ENCODE measurements at regions of chr19 and their contacts with region 1.

Region 1: DNA sequence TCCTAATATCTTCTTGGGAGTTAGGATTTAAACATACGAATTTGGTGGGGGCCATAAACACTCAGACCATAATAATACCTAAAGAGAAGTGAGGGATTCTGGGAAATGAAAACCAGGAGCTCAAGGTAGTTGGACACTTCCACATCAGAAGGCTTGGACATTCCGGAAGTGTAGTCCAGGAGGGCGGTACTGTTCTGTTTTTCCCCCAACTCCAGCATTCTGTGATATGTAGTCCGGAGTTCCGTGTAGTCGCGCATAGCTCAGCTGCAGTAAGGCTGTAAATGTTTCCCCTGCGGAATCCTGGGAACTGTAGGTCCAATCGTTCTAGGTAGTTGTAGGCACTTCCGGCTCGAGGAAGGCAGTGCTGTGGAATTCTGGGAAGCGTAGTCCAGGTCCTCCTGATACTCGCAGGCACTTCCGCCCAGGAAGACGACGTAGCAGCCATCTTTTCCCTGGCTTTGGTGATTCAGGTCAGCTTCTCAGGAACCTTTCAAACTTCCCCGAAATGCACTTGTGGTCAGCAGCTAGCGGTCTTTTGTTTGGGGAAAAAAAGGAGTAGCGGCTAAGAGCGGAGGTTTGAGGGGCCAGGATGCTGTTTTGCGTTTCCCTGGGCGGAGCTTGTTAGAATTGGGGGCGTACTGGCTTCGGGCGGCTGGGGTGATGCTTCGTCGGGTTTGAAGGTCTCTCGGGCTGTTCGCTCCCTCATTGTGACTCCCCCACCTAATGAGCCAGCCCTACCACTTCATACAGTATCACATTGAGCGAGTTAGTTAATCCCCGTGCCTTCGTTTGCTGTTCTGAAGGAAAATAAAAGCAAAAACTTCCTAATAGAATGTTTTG is at the start of gene ZNF226:
- DNase-seq: peak; percentile 89
- H3K4me3 Mint-ChIP-seq: peak within 1 kb of the TSS; percentile 97
- H3K27ac Mint-ChIP-seq: peak within 1 kb of the TSS; percentile 97
- H3K4me1 Mint-ChIP-seq: peaks cover 24% of the 10 kb centered on the region
- H3K27me3 Mint-ChIP-seq: no peaks in the 10 kb centered on the region
- total RNA-seq, gene ZNF226: 10.6 to 10.7 TPM

Region 2: GRCh38 chr19:44025217-44025936 is 139.5 kb before region 1 on chr19 and contains the start of gene ZNF222:
- CTCF ChIA-PET with region 1: no interaction called
- POLR2A ChIA-PET with region 1: no interaction called
- intact Hi-C with region 1: loop called (anchors 5 kb)
- DNase-seq: peak; percentile 90
- H3K4me3 Mint-ChIP-seq: peak within 1 kb of the TSS; percentile 90
- H3K27ac Mint-ChIP-seq: peak within 1 kb of the TSS; percentile 60
- H3K4me1 Mint-ChIP-seq: peaks cover 18% of the 10 kb centered on the region
- H3K27me3 Mint-ChIP-seq: peaks cover 2% of the 10 kb centered on the region
- total RNA-seq, gene ZNF222: 0.88 to 0.94 TPM

Region 3: DNA sequence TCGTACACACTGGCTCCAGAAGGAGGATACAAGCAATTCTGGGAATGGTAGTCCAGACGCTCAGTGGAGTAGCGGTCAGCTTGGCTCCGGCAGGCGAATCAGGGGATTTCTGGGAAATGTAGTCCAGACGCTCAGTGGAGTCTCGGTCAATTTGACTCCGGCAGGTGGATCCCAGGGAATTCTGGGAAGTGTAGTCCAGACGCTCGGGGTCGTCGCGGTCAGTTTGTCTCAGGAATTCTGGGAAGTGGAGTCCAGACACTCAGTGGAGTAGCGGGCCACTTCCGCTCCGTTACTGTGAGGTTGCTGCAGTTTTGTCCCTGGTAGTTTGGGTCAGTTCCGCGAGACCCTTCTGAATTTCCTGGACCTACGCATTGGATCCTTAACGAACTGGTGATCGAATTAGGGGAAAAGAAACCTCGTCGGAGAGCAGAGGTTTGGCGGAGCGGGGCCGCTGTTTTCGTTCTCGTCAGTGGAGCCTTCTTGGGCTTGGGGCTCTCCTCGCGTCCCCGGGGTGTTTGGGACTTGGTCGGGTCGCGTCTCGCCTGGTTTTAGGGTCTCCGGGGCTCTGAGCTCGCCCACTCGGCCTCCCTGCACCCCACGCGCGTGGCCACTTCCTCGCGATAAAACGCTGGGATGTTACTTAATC is 51.6 kb before region 1 on chr19 and contains the start of gene ZNF225:
- CTCF ChIA-PET with region 1: no interaction called
- POLR2A ChIA-PET with region 1: no interaction called
- intact Hi-C with region 1: loop called (anchors 1 kb)
- DNase-seq: peak; percentile 92
- H3K4me3 Mint-ChIP-seq: peak within 1 kb of the TSS; percentile 91
- H3K27ac Mint-ChIP-seq: peak within 1 kb of the TSS; percentile 74
- H3K4me1 Mint-ChIP-seq: peaks cover 22% of the 10 kb centered on the region
- H3K27me3 Mint-ChIP-seq: no peaks in the 10 kb centered on the region
- total RNA-seq, gene ZNF225: 2.5 to 2.9 TPM

Region 4: GRCh38 chr19:44141191-44142058 is 23.5 kb before region 1 on chr19 and contains the start of gene ZNF234:
- CTCF ChIA-PET with region 1: no interaction called
- POLR2A ChIA-PET with region 1: interaction called, 3 read pairs
- intact Hi-C with region 1: loop called (anchors 1 kb)
- DNase-seq: peak; percentile 78
- H3K4me3 Mint-ChIP-seq: peak within 1 kb of the TSS; percentile 91
- H3K27ac Mint-ChIP-seq: peak within 1 kb of the TSS; percentile 83
- H3K4me1 Mint-ChIP-seq: peaks cover 15% of the 10 kb centered on the region
- H3K27me3 Mint-ChIP-seq: no peaks in the 10 kb centered on the region
- total RNA-seq, gene ZNF234: 7.3 to 8.7 TPM

Region 5: DNA sequence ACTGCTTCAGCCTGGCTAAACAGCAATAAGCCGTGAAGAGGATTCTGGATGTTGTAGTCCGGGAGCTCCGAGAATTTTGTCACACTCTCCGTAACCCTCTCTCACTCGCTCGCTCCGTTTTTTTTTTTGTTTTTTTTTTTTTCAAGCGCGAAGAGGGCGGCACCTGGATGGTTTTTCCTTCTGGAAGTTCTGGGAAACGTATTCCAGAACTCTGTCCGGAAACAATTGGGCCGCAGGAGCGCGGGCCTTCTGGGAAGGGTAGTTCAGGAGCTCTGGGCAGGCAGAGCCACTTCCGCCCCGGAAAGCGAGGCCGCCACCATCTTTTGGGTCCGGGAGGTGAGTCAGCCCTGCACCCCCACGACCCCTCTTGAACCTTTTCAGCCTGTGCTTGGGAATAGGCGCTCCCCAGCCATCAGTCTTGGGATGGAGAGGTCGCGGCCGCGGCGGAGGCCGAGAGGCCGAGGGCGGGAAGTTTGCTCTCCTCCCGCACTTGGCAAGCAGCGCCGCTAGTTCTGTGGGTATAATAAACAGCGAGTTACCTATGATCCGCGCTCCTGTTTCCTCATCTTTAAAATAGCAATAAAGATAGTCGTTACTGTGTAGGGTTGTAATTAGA is 47.5 kb after region 1 on chr19 and contains the start of gene ZNF227:
- CTCF ChIA-PET with region 1: interaction called, 4 read pairs
- POLR2A ChIA-PET with region 1: interaction called, 4 read pairs
- intact Hi-C with region 1: loop called (anchors 2 kb)
- DNase-seq: peak; percentile 89
- H3K4me3 Mint-ChIP-seq: peak within 1 kb of the TSS; percentile 91
- H3K27ac Mint-ChIP-seq: peak within 1 kb of the TSS; percentile 88
- H3K4me1 Mint-ChIP-seq: peaks cover 23% of the 10 kb centered on the region
- H3K27me3 Mint-ChIP-seq: no peaks in the 10 kb centered on the region
- total RNA-seq, gene ZNF227: 13.5 TPM

Region 6: GRCh38 chr19:44304659-44305193 is 139.8 kb after region 1 on chr19 and contains the start of gene ZNF235:
- CTCF ChIA-PET with region 1: no interaction called
- POLR2A ChIA-PET with region 1: interaction called, 5 read pairs
- intact Hi-C with region 1: loop called (anchors 1 kb)
- DNase-seq: peak; percentile 87
- H3K4me3 Mint-ChIP-seq: peak within 1 kb of the TSS; percentile 83
- H3K27ac Mint-ChIP-seq: peak within 1 kb of the TSS; percentile 18
- H3K4me1 Mint-ChIP-seq: peaks cover 15% of the 10 kb centered on the region
- H3K27me3 Mint-ChIP-seq: no peaks in the 10 kb centered on the region
- total RNA-seq, gene ZNF235: 1.2 to 1.3 TPM

Region 7: DNA sequence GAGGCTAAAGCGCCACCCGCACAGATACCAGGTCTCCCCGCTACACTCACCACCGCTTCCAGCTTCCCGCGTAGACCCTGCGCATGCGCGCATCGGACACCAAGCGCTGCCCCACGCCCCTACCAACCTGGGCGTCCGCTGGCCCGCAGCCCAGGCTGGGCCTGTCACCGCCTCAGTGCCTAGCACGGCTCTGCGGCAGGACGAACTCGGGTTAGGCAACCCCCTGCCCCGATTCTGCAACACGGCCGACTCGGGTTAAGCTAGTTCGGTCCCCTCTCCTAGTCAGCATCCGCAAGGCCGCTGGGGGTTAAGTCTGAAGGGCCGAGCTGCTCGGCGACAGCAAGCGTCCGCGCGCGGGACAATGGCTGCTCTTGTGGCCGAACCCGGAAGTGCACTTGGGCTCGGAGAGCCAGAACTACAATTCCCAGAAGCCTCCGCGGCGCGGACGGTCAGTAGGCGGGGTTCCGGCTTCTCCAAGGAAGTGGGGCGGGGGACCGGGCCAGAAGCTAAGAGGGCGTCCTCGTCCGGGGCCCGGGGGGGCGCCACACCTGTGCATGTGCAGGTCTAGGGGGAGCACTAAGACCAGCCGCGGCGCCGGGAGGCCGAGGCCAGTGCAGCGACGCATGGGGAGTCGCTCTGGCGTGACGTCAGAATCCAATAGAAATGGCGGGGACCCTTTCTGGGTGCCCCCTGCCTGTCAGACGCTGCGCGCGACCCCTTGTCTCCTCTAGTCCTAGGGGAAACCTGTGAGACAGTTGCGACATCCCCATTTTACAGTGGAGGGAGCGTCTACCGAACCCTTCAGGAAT is 335.5 kb after region 1 on chr19 and contains the start of gene ZNF180:
- CTCF ChIA-PET with region 1: no interaction called
- POLR2A ChIA-PET with region 1: no interaction called
- intact Hi-C with region 1: loop called (anchors 1 kb)
- DNase-seq: peak; percentile 96
- H3K4me3 Mint-ChIP-seq: peak within 1 kb of the TSS; percentile 87
- H3K27ac Mint-ChIP-seq: peak within 1 kb of the TSS; percentile 90
- H3K4me1 Mint-ChIP-seq: peaks cover 23% of the 10 kb centered on the region
- H3K27me3 Mint-ChIP-seq: peaks cover 6% of the 10 kb centered on the region
- total RNA-seq, gene ZNF180: 4.3 to 5.4 TPM